ENCODE measurements at regions of chr14 and their contacts with region 1.

Region 1: GRCh38 chr14:59675394-59675793 is 98.8 kb upstream of the CCDC175 start:
- DNase-seq: no peak
- H3K27ac ChIP-seq: no peak overlapping the region
- CTCF ChIP-seq: no peak

Region 2: DNA sequence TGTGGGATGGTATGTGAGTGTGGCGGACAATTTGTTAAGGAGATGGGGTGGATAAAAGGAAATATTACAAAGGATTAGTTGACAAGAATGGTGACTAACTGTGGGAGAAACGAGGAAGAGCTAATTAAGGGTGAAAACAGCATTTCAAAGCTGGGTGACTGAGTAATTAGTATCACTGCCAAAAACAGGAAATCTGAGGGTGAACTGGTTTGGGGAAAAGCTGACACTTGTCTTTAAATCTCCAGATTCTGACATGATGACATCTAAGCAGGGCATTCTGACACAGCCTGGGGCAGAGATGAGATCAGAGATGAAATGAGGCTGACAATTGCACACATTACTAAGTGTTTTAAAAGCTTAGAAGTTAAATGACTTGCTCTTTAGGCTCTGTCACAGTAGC is 56.3 kb before region 1 on chr14:
- CTCF ChIA-PET with region 1: no interaction called
- POLR2A ChIA-PET with region 1: no interaction called
- DNase-seq: peak; percentile 18
- H3K27ac ChIP-seq: no peak overlapping the region
- CTCF ChIP-seq: no peak

Region 3: DNA sequence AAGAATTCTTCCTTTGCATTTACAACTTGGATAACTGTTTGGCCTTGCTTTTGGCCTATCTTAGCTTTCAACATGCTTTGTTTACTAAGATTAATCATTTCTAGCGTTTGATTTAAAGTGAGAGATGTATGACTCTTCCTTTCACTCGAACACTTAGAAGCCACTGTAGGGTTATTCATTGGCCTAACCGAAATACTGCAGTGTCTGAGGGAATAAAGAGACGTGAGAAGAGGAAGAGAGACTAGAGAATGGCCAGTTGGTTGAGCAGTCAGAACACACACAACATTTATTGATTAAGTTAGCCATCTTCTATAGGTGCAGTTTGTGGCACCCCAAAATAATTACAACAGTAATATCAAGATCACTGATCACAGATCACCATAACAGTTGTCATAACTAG is 36.5 kb before region 1 on chr14:
- CTCF ChIA-PET with region 1: no interaction called
- POLR2A ChIA-PET with region 1: no interaction called
- DNase-seq: no peak
- H3K27ac ChIP-seq: no peak overlapping the region
- CTCF ChIP-seq: no peak

Region 4: GRCh38 chr14:59739794-59740193 is 64.4 kb after region 1 on chr14:
- CTCF ChIA-PET with region 1: no interaction called
- POLR2A ChIA-PET with region 1: no interaction called
- DNase-seq: no peak
- H3K27ac ChIP-seq: no peak overlapping the region
- CTCF ChIP-seq: no peak

Region 5: DNA sequence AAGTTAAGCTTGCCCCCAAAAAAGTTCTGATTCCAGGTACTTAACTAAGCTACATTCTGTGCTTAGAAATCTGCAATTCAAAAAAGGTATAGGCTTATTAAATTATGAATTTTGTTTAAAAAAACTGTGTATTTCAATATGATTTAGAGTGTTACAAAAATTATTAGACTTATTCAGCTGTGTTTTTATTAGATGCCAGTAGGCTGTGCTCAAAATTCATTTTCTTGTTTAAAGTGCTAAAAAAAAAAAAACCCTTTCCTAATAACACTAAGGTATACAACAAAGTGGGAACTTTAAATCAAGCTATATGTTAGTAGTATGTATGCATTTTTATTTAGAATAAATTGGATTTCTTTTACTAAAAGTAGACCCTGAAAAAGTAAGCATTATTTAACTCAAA is 269.5 kb after region 1 on chr14:
- CTCF ChIA-PET with region 1: interaction called, 10 read pairs
- POLR2A ChIA-PET with region 1: no interaction called
- DNase-seq: no peak
- H3K27ac ChIP-seq: no peak overlapping the region
- CTCF ChIP-seq: no peak; the same call in 1 of the 2 replicates